ENCODE measurements at regions of chr19 and their contacts with region 1.

Region 1: GRCh38 chr19:40312533-40312932 is 27.4 kb upstream of the AKT2 start:
- DNase-seq: no peak
- H3K4me3 ChIP-seq: no peak overlapping the region
- H3K27ac ChIP-seq: no peak overlapping the region
- H3K4me1 ChIP-seq: no peaks in the 10 kb centered on the region
- H3K27me3 ChIP-seq: no peaks in the 10 kb centered on the region
- CTCF ChIP-seq: no peak
- POLR2A ChIP-seq: no peak

Region 2: GRCh38 chr19:41050434-41050833 is 737.9 kb after region 1 on chr19:
- intact Hi-C with region 1: loop called (anchors 10 kb)
- DNase-seq: no peak
- H3K4me3 ChIP-seq: no peak overlapping the region
- H3K27ac ChIP-seq: no peak overlapping the region
- H3K4me1 ChIP-seq: no peaks in the 10 kb centered on the region
- H3K27me3 ChIP-seq: no peaks in the 10 kb centered on the region
- CTCF ChIP-seq: no peak
- POLR2A ChIP-seq: no peak

Measured in breast epithelium (tissue), 4 donors.